MCF 10A (cell line): ENCODE measurements at regions of chr5 and their contacts with region 1.

Region 1: GRCh38 chr5:142699184-142699720 is 13.4 kb upstream of the FGF1 start:
- DNase-seq: peak; percentile 93
- H3K4me3 Mint-ChIP-seq: no peak overlapping the region
- H3K27ac Mint-ChIP-seq: no peak overlapping the region
- H3K4me1 Mint-ChIP-seq: peaks cover 14% of the 10 kb centered on the region
- H3K27me3 Mint-ChIP-seq: no peaks in the 10 kb centered on the region
- CTCF ChIP-seq: peak; percentile 100

Region 2: GRCh38 chr5:142151436-142152383 is 547.5 kb before region 1 on chr5:
- CTCF ChIA-PET with region 1: interaction called, 12 read pairs
- POLR2A ChIA-PET with region 1: no interaction called
- intact Hi-C with region 1: loop called (anchors 1 kb)
- DNase-seq: peak; percentile 85
- H3K4me3 Mint-ChIP-seq: no peak overlapping the region
- H3K27ac Mint-ChIP-seq: no peak overlapping the region
- H3K4me1 Mint-ChIP-seq: no peaks in the 10 kb centered on the region
- H3K27me3 Mint-ChIP-seq: no peaks in the 10 kb centered on the region
- CTCF ChIP-seq: peak; percentile 89

Region 3: DNA sequence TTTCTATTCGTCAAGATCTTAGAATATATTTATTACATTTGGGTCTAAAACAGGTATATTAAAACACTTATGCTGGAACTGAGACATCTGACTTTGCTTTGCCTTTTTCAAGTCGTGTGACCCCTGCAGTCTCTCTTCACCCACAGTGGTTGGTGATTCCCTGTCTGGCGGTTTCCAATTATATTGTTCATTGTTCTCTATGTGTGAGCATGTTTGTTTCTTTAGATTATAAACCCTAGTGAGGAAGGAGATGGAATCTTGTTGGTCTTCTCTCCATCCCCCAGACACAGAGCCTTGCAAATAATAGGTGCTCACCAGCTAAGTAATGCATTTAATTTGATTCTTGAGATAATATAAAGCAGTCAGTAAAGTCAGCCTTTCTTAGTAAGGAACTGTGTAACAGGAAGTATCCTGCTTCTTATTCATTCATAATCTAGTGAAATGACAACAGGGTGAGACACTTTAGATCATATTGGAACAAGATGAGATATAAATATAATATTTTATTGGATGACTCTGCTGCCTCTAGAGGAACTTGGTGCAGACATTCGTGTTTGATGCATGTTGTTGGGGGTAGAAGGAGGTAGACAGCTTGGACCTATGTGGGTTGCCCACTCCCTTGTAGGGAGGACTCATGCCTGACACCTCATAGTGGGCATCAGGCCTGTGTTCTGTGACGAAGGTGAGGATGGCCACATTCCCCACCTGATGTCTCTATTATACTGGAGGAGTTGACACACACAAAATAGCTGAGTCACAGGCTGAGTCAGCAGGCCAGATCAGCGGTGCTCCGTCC is 101.5 kb before region 1 on chr5:
- CTCF ChIA-PET with region 1: interaction called, 12 read pairs
- POLR2A ChIA-PET with region 1: no interaction called
- intact Hi-C with region 1: no loop called
- DNase-seq: peak; percentile 89
- H3K4me3 Mint-ChIP-seq: no peak overlapping the region
- H3K27ac Mint-ChIP-seq: no peak overlapping the region
- H3K4me1 Mint-ChIP-seq: peaks cover 16% of the 10 kb centered on the region
- H3K27me3 Mint-ChIP-seq: no peaks in the 10 kb centered on the region
- CTCF ChIP-seq: peak; percentile 20

Region 4: DNA sequence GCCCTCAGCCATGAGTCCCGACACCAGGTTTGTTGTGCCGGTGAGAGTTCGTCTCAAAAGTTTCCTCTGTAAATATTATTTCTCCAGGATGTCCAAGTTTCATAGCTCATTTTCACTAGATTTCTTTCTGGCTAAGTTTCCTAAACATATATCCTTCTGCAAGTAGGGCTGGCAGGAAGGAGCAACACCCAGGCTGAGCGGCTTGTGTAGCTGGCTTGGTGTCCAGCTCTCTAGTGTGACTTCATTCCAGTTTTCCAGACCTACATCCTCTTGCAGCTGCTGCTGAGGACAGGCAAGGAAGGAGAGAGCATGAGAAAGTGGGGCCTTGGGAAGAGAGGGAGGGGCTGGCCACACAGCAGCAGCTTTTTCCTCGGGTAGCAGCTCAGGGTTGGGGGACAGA is 93.6 kb before region 1 on chr5:
- CTCF ChIA-PET with region 1: interaction called, 140 read pairs
- POLR2A ChIA-PET with region 1: interaction called, 3 read pairs
- intact Hi-C with region 1: no loop called
- DNase-seq: no peak
- H3K4me3 Mint-ChIP-seq: no peak overlapping the region
- H3K27ac Mint-ChIP-seq: no peak overlapping the region
- H3K4me1 Mint-ChIP-seq: peaks cover 10% of the 10 kb centered on the region
- H3K27me3 Mint-ChIP-seq: no peaks in the 10 kb centered on the region
- CTCF ChIP-seq: no peak

Region 5: GRCh38 chr5:142627383-142628255 is 71.6 kb before region 1 on chr5:
- CTCF ChIA-PET with region 1: interaction called, 31 read pairs
- POLR2A ChIA-PET with region 1: interaction called, 6 read pairs
- intact Hi-C with region 1: no loop called
- DNase-seq: peak; percentile 42
- H3K4me3 Mint-ChIP-seq: no peak overlapping the region
- H3K27ac Mint-ChIP-seq: no peak overlapping the region
- H3K4me1 Mint-ChIP-seq: no peaks in the 10 kb centered on the region
- H3K27me3 Mint-ChIP-seq: no peaks in the 10 kb centered on the region
- CTCF ChIP-seq: no peak

Region 6: GRCh38 chr5:142783601-142784341 is 84.5 kb after region 1 on chr5:
- CTCF ChIA-PET with region 1: no interaction called
- POLR2A ChIA-PET with region 1: no interaction called
- intact Hi-C with region 1: no loop called
- DNase-seq: no peak
- H3K4me3 Mint-ChIP-seq: no peak overlapping the region
- H3K27ac Mint-ChIP-seq: no peak overlapping the region
- H3K4me1 Mint-ChIP-seq: peaks cover 20% of the 10 kb centered on the region
- H3K27me3 Mint-ChIP-seq: no peaks in the 10 kb centered on the region
- CTCF ChIP-seq: no peak

Region 7: GRCh38 chr5:143016777-143017516 is 317.7 kb after region 1 on chr5:
- CTCF ChIA-PET with region 1: no interaction called
- POLR2A ChIA-PET with region 1: no interaction called
- intact Hi-C with region 1: no loop called
- DNase-seq: peak; percentile 85
- H3K4me3 Mint-ChIP-seq: no peak overlapping the region
- H3K27ac Mint-ChIP-seq: no peak overlapping the region
- H3K4me1 Mint-ChIP-seq: peaks cover under 1% of the 10 kb centered on the region
- H3K27me3 Mint-ChIP-seq: no peaks in the 10 kb centered on the region
- CTCF ChIP-seq: peak; percentile 83